ENCODE measurements at regions of chr22 and their contacts with region 1.

Region 1: DNA sequence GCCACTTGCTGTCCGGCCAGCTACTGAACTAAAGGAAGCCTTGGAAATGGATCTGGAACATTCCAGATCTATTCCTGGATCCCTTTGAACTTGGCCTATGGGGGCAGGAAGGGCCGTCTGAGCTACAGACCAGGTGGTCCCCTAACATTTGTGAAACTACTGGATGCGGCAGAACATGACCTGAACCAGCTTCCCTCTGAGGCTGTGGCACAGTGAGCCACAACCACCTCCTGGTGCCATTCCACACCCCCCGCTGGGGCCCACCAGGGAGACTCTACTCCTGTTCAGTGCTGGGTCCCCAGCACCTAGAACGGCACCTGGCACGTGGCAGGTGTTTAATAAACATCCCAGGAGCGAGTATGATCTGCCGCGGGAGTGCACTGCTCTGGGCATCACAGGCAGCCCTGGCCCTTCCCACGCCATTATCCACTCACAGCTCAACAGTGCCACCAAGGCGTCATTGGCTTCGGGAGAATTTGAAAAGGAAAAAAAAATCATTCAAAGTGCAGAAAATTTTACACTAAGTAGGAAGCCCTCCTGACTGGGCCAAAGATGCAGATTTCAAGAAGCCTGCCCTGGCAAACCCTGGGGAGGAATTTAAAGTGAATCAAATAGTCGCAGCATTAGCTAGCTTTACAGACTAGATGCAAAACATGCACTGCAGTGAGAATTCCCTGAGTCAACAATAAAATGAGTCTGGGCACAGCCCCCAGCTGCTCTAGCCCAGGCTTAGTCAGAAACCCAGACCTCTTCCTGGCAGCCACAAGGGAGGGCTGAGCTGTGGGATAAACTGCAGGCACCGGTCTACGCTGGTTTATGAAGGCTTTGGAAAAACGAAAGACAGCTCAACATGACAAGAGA is 14.3 kb upstream of the EFCAB6 start:
- DNase-seq: no peak
- ATAC-seq: no peak

Region 2: DNA sequence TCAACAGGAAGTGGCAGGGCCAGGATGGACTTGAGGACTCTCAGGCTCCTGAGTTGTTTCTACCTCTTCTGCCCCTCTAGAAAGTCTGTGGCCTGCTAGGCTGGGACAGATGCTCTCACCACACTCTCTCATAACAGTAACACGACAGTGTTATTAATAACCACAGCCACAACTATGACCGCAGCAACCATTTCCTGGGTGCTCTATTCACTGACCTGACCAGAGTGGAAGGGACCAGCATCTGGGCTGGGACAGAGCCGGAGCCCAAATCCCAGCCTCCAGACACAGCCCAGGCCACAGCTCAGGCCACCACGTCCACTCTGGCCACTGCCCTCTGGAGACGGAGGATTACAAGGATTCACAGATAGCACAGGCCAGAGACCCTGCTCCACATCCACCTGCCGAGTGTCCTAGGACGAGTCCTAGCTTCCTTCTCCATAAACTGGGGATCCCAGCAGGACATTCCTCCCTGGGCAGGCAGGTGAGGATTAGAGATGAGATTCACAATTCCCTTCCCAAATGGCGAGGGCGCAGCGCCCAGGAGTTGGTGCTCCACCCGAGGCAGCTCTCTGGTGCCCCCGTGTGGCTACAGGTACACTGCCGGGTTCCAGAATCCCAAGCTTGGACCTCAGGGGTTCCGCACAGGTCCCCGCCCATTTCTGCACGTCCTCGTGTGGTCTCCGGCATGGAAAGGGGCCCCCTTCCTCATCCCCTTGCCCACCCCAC is 58.4 kb after region 1 on chr22:
- intact Hi-C with region 1: loop called (anchors 1 kb)
- DNase-seq: no peak
- ATAC-seq: no peak